AG04449 (cell line): ENCODE measurements at regions of chr11 and their contacts with region 1.

Region 1: GRCh38 chr11:12052676-12053605 is 44.5 kb upstream of the DKK3 start:
- DNase-seq: no peak
- H3K4me3 ChIP-seq: no peak overlapping the region
- CTCF ChIP-seq: peak; percentile 31

Region 2: DNA sequence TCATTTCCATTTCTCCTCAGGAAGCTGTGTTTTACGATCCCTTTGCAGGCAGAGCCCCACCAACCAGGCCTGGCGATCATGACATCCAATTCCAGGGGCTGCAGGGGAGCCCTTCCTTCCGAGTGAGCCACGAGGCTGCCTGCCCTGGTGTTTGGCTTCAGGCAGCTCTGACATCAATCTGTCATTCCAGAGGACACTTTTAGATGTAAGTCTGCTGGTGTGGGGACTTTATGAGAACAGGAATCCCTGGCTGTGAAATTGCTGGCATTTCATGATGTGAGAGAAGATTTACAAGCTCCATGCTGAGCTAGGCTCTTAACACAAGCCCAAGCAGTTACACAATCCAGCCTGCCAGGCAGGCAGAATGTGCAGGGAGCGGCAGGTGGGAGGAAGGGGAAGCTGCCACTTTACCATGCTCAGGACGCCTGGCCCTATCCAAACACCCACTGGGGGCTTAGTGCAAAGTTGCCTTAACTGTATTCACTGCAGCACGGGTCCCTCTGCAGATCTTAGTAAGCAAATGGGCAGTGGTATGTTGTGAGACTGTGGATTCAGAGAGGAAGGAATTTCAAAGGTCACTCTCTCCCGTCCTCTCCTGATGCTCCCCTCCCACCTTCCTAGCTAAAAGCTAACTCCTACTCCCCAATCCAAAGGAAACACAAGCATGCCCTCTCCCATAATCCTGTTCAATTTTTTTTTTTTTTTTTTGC is 14.0 kb after region 1 on chr11:
- CTCF ChIA-PET with region 1: interaction called, 24 read pairs
- POLR2A ChIA-PET with region 1: no interaction called
- DNase-seq: no peak
- H3K4me3 ChIP-seq: no peak overlapping the region
- CTCF ChIP-seq: no peak

Region 3: DNA sequence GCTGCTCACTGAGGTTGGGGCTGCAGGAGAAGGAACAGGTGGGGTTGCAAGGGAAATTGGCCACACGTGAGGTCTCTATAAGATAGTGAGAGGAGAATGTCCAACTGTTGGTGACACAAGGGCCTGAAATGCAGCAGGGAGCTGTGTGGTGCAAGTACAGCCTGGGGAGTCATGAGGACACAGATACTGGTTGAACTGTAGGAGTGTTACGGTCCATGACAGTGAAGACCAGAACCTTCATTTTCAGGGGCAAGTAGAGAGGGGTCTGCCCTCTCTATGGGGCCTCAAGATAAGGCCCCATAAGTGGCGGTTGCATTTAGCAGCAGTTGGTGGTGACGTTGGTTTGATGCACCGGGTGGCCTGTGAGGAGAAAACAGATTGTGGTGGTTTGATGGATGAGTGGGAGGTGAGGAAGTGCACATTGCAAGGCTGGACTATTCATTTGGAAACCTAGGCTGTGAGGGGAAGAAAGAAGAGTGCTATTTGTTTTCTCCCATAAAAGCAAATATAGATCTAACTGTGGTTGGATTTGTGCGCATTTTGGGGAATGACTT is 96.8 kb after region 1 on chr11:
- CTCF ChIA-PET with region 1: no interaction called
- POLR2A ChIA-PET with region 1: no interaction called
- DNase-seq: no peak
- H3K4me3 ChIP-seq: no peak overlapping the region
- CTCF ChIP-seq: no peak